Ascending aorta (tissue), 2 donors: ENCODE measurements at regions of chr1 and their contacts with region 1.

Region 1: GRCh38 chr1:161399257-161399998 is 31.8 kb upstream of the CFAP126 start:
- DNase-seq: peak; percentile 69 to 95
- H3K4me3 ChIP-seq: peak overlapping the region; percentile 78 to 86
- H3K27ac ChIP-seq: peak overlapping the region; percentile 100
- H3K4me1 ChIP-seq: peaks cover 0 to 8% of the 10 kb centered on the region in 2 donors
- H3K27me3 ChIP-seq: no peaks in the 10 kb centered on the region
- CTCF ChIP-seq: peak in 2 of 3 experiments; percentile 34 to 35

Region 2: GRCh38 chr1:160205242-160206035 is 1194.0 kb before region 1 on chr1 and contains the start of gene PEA15:
- intact Hi-C with region 1: loop called (anchors 10 kb)
- DNase-seq: peak in 1 of 2 donors; percentile 85
- H3K4me3 ChIP-seq: peak within 1 kb of the TSS; percentile 87 to 94
- H3K27ac ChIP-seq: peak within 1 kb of the TSS; percentile 94 to 98
- H3K4me1 ChIP-seq: peaks cover under 1 to 42% of the 10 kb centered on the region in 2 donors
- H3K27me3 ChIP-seq: no peaks in the 10 kb centered on the region
- CTCF ChIP-seq: no peak
- total RNA-seq, gene PEA15: 178 TPM

Region 3: DNA sequence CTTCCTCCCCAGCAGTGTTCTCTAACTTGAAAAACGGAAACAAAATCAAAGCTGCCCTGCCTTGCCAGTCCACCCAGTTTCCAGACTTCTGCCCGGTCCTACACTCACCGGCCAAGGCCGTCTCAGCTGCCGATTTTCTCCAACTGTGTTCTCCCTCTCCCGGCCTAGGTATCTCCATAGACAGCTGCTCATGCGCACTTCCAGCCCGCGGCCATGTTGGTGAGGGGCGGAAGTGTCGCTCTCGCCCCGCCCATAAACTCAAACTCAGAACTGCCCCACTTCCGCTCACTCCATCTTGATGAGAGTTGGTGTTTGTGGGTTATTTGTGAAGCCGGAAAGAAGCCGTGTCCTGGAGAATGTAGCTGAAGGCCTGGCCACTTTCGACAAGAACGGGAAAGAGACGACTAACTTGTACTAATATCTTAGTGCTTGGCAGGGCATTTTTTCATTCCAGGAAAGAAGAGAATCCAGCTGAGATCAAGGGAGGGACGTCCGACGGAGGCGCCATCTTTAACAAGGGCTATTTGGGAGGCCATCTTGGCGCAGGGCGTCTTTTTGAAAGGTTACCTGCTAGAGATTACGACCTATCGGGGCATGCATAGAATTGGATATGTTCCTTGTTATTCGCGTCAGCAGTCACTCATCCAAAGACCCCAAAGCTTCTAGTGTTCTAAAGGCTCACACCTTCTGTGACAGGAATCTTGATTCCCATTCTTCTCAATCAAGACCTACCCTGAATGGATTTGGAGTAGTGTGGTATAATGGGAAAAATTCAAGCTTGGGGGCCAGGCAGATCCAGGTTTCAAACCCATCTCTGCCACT is 353.5 kb before region 1 on chr1 and contains the start of gene USF1:
- intact Hi-C with region 1: loop called (anchors 10 kb)
- DNase-seq: peak; percentile 79 to 97
- H3K4me3 ChIP-seq: peak within 1 kb of the TSS; percentile 63 to 95
- H3K27ac ChIP-seq: peak within 1 kb of the TSS; percentile 93 to 96
- H3K4me1 ChIP-seq: peaks cover 6 to 13% of the 10 kb centered on the region in 2 donors
- H3K27me3 ChIP-seq: no peaks in the 10 kb centered on the region
- CTCF ChIP-seq: no peak
- total RNA-seq, gene USF1: 68.5 TPM

Region 4: GRCh38 chr1:161274874-161275273 is 124.6 kb before region 1 on chr1:
- intact Hi-C with region 1: no loop called
- DNase-seq: no peak
- H3K4me3 ChIP-seq: no peak overlapping the region
- H3K27ac ChIP-seq: no peak overlapping the region
- H3K4me1 ChIP-seq: no peaks in the 10 kb centered on the region
- H3K27me3 ChIP-seq: no peaks in the 10 kb centered on the region
- CTCF ChIP-seq: no peak

Region 5: GRCh38 chr1:161749509-161750407 is 350.3 kb after region 1 on chr1 and contains the start of gene DUSP12:
- intact Hi-C with region 1: loop called (anchors 5 kb)
- DNase-seq: peak; percentile 69 to 97
- H3K4me3 ChIP-seq: peak within 1 kb of the TSS; percentile 78 to 90
- H3K27ac ChIP-seq: peak within 1 kb of the TSS; percentile 80 to 85
- H3K4me1 ChIP-seq: peaks cover 4 to 10% of the 10 kb centered on the region in 2 donors
- H3K27me3 ChIP-seq: no peaks in the 10 kb centered on the region
- CTCF ChIP-seq: peak in 2 of 3 experiments; percentile 7 to 31
- total RNA-seq, gene DUSP12: 21.0 TPM